ENCODE measurements at regions of chr20 and their contacts with region 1.

Region 1: DNA sequence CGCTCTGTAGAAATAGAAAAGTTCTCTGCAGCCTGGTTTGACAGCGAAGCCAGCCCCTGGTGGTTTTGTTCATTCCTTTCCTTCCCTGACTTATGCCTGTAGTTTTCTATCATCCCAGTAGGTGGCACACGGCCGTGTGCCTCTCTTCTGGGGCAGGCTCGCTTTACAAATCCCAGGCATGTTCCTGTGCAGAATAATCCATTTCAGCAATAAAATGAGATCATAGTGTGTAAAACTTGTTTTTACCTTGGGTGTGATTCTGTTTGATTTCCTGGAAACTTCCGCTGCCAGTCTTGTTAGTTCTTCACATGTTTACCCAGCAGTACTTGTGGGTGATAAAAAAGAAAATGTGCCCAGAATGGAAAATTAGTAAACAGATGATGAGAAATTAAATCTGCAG is 7.4 kb upstream of the INSM1 start:
- DNase-seq: peak; percentile 45 to 87
- H3K4me3 ChIP-seq: no peak overlapping the region
- H3K27ac ChIP-seq: no peak overlapping the region
- H3K4me1 ChIP-seq: peaks cover 17 to 53% (median 35%) of the 10 kb centered on the region in 4 donors
- H3K27me3 ChIP-seq: peaks cover 18 to 64% (median 43%) of the 10 kb centered on the region in 3 donors
- CTCF ChIP-seq: peak in 5 of 7 experiments; percentile 63 to 69 (median 65)
- EP300 ChIP-seq: no peak
- POLR2A ChIP-seq: no peak

Region 2: DNA sequence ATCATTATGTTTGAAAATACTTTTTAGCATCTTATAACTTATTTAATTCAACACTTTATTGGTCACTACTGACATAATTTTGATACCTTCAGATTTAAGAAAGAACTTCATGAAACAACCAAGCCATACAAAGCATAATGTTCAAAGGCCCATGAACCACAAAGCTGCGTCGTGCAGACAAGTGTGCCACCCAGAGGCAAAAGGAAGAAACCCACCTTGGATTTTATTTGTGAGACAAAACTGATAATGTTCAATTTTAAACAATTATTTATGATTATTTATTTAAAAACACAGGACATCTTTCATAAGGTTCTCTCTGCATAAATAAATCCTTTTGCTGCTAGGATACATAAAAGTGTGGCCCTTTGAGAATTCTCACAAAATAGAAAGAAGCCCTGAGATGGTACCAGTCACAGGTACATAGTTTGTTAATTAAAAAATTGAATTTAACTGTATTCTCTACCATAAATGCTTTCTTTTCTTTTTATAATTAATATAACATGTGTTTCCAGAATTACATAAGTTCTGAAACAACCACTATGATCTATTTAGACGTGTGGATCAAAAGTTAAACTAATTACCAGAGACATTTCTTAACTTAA is 208.2 kb after region 1 on chr20:
- intact Hi-C with region 1: loop called (anchors 5 kb)
- DNase-seq: peak in 1 of 2 donors; percentile 73
- H3K4me3 ChIP-seq: no peak overlapping the region
- H3K27ac ChIP-seq: no peak overlapping the region
- H3K4me1 ChIP-seq: peaks cover 0 to 19% (median 8%) of the 10 kb centered on the region in 4 donors
- H3K27me3 ChIP-seq: no peaks in the 10 kb centered on the region
- CTCF ChIP-seq: peak in 5 of 7 experiments; percentile 38 to 61 (median 51)
- EP300 ChIP-seq: no peak
- POLR2A ChIP-seq: no peak

Measured in stomach (tissue), 19 donors.